ENCODE measurements at regions of chr19 and their contacts with region 1.

Region 1: DNA sequence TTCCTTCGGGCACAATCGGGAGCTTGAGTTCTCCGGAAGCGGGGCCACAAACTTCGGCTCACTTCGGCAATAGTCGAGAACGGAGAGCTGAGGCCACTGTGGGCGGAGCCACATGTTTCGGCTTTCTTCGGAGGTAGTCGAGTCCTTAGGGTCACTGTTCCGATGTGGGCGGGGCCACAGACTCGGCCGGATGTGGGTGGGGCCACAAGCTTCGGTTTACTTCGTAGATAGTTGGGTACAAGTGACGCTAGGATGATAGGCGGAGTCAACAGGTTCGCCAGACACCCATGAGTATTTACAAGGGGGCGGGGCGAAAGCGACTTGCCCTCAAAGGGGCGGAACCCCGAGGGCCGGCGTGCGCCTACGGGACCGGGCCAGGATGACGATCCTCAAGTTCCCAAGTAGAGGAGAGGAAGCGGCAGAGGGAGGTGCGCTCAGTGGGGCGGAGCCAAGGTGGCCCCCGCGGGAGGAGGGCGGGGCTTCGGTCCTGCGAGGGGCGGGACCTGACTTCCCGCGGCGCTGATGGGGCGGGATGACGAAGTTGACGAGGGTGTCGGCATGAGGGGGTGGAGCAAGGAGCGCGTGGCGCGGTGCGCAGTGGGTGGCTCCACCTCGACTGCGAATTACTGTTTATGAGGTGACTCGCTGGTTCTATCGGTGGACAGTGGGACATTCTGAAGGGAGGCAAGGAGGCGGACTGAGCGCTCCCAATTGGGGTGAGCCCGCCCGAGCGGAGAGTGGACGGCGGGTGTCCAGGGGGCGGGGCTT is 539 bp upstream of the MBOAT7 start:
- DNase-seq: peak; percentile 100
- H3K4me3 Mint-ChIP-seq: peak overlapping the region; percentile 94
- H3K27ac Mint-ChIP-seq: peak overlapping the region; percentile 100
- H3K4me1 Mint-ChIP-seq: peaks cover 31% of the 10 kb centered on the region
- H3K27me3 Mint-ChIP-seq: no peaks in the 10 kb centered on the region

Region 2: GRCh38 chr19:54115109-54116063 is 74.5 kb before region 1 on chr19 and contains the starts of genes PRPF31 and TFPT:
- intact Hi-C with region 1: loop called (anchors 1 kb)
- DNase-seq: peak; percentile 93
- H3K4me3 Mint-ChIP-seq: peak within 1 kb of the TSS; percentile 94
- H3K27ac Mint-ChIP-seq: peak within 1 kb of the TSS; percentile 91
- H3K4me1 Mint-ChIP-seq: peaks cover 32% of the 10 kb centered on the region
- H3K27me3 Mint-ChIP-seq: no peaks in the 10 kb centered on the region
- total RNA-seq, gene PRPF31: 110 and 118 TPM in 2 replicates
- total RNA-seq, gene TFPT: 31.1 and 33.4 TPM in 2 replicates

Region 3: GRCh38 chr19:54168174-54168917 is 21.6 kb before region 1 on chr19:
- intact Hi-C with region 1: loop called (anchors 1 kb)
- DNase-seq: peak; percentile 81
- H3K4me3 Mint-ChIP-seq: no peak overlapping the region
- H3K27ac Mint-ChIP-seq: no peak overlapping the region
- H3K4me1 Mint-ChIP-seq: peaks cover 15% of the 10 kb centered on the region
- H3K27me3 Mint-ChIP-seq: peaks cover 2% of the 10 kb centered on the region

Region 4: DNA sequence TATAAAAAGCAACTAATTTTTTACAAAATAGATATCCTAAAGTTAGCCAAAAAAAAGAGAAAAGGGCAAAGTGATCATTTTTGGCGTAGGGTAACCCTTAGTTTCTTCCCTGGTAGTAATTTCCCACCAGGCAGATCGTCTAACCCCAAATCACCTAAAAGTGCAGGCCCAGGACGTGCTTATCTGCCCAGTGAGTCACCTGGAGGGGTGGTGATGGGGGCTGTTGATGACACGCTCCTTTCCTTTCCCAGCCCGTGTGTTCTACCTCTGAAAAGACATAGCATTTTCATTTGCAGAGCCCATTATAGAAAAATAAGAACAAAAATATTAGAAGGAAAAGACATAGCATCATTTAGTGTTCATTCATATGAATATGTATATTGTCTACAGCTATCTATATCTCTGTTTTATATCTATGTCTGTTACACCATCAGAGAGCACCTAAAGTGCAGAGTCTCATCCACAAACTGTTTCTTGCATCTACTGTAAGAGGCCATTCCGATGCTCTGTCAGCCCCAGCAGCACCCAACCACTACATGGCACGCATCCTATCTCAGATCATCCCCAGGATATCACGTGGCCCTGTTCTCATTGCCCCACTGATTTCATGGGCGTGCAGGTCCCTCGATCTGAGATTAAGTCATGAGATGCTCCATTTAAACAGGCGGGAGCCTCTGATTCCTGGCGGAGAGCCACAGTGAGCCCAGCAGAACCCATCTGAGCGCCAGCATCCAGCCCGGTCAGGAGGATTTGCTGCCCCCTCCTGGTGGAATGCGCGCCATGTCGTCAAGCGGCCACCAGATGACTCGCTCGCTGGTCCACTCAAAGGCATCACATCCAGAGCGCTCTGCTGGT is 41.4 kb after region 1 on chr19:
- intact Hi-C with region 1: loop called (anchors 1 kb)
- DNase-seq: peak; percentile 77
- H3K4me3 Mint-ChIP-seq: no peak overlapping the region
- H3K27ac Mint-ChIP-seq: no peak overlapping the region
- H3K4me1 Mint-ChIP-seq: peaks cover 6% of the 10 kb centered on the region
- H3K27me3 Mint-ChIP-seq: peaks cover 43% of the 10 kb centered on the region

Region 5: DNA sequence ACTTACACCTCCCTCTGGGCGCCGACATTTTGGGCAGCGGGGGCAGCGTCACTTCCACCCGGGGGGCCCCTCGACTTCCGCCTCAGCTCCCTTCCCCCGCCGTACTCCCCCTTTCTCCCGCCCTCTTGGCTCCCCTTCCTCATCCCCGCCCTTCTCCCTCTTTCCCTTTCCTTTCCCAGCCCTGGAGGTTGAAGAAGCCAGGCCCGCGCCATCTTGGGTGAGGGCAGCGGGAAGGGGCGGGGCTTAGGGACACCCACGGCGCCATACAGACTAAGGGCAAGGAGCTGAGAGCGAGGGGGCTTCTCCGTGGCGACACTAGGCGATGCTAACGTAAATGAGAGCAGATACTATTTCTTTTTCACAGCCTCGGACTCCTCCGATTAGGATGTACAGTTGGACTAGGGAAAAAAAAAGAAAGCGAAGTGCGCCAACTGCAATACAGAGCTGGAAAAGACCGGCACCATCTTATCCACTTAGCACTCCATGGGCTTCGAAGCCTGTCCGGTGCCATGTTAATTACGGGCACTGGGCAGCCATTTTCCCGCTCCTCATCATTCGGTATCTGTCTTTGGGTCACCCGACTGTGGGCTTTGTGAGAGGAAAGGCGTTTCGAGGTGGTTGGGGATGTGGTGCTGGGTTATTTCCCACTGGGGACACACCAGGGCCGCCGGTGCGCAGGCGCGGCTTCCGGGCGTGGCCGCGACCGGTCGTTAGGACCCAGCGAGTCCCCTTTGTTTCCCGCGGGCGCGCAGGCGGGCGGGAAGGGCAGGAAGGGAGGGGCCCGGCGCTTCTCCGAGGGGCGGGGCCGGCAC is 1409.8 kb after region 1 on chr19 and contains the start of gene FIZ1:
- intact Hi-C with region 1: loop called (anchors 1 kb)
- DNase-seq: peak; percentile 95
- H3K4me3 Mint-ChIP-seq: peak within 1 kb of the TSS; percentile 93
- H3K27ac Mint-ChIP-seq: peak within 1 kb of the TSS; percentile 98
- H3K4me1 Mint-ChIP-seq: peaks cover 28% of the 10 kb centered on the region
- H3K27me3 Mint-ChIP-seq: no peaks in the 10 kb centered on the region
- total RNA-seq, gene FIZ1: 24.2 and 24.7 TPM in 2 replicates

Measured in activated T-helper 1 cell treated with anti-CD3 and anti-CD28 coated beads, Interleukin-12 subunit alpha, Interleukin-12 subunit beta, Interleukin-2, Interleukin-4 antibody, amounts not matched to agents 30 ng/mL and 10 ng/mL and 1 ng/mL, durations not matched to agents 14 hours and 24 hours and 36 hours (primary cell).